Esophagus squamous epithelium (tissue), 5 donors: ENCODE measurements at regions of chr14 and their contacts with region 1.

Region 1: GRCh38 chr14:63632932-63633514 is 8.6 kb downstream of the WDR89 start:
- DNase-seq: no peak
- H3K4me3 ChIP-seq: no peak overlapping the region
- H3K27ac ChIP-seq: no peak overlapping the region
- H3K4me1 ChIP-seq: no peaks in the 10 kb centered on the region
- H3K27me3 ChIP-seq: no peaks in the 10 kb centered on the region
- CTCF ChIP-seq: peak in 5 of 6 experiments; percentile 24 to 70 (median 53)
- POLR2A ChIP-seq: no peak

Region 2: GRCh38 chr14:63437953-63438757 is 194.9 kb before region 1 on chr14:
- intact Hi-C with region 1: no loop called
- DNase-seq: no peak
- H3K4me3 ChIP-seq: peak overlapping the region in 2 of 4 donors; percentile 12 to 51
- H3K27ac ChIP-seq: peak overlapping the region; percentile 42 to 82 (median 76)
- H3K4me1 ChIP-seq: peaks cover 24 to 64% (median 54%) of the 10 kb centered on the region in 3 donors
- H3K27me3 ChIP-seq: no peaks in the 10 kb centered on the region
- CTCF ChIP-seq: peak in 4 of 6 experiments; percentile 31 to 52 (median 32)
- POLR2A ChIP-seq: no peak

Region 3: GRCh38 chr14:63760014-63760413 is 127.0 kb after region 1 on chr14:
- intact Hi-C with region 1: loop called (anchors 10 kb)
- DNase-seq: no peak
- H3K4me3 ChIP-seq: no peak overlapping the region
- H3K27ac ChIP-seq: peak overlapping the region in 1 of 4 donors; percentile 49
- H3K4me1 ChIP-seq: no peaks in the 10 kb centered on the region
- H3K27me3 ChIP-seq: no peaks in the 10 kb centered on the region
- CTCF ChIP-seq: no peak
- POLR2A ChIP-seq: no peak

Region 4: GRCh38 chr14:64656986-64657385 is 1024.0 kb after region 1 on chr14:
- intact Hi-C with region 1: no loop called
- DNase-seq: no peak
- H3K4me3 ChIP-seq: no peak overlapping the region
- H3K27ac ChIP-seq: peak overlapping the region in 1 of 4 donors; percentile 11
- H3K4me1 ChIP-seq: peaks cover 7 to 30% (median 19%) of the 10 kb centered on the region in 3 donors
- H3K27me3 ChIP-seq: no peaks in the 10 kb centered on the region
- CTCF ChIP-seq: no peak
- POLR2A ChIP-seq: no peak